OCI-LY7 (cell line): ENCODE measurements at regions of chr21 and their contacts with region 1.

Region 1: DNA sequence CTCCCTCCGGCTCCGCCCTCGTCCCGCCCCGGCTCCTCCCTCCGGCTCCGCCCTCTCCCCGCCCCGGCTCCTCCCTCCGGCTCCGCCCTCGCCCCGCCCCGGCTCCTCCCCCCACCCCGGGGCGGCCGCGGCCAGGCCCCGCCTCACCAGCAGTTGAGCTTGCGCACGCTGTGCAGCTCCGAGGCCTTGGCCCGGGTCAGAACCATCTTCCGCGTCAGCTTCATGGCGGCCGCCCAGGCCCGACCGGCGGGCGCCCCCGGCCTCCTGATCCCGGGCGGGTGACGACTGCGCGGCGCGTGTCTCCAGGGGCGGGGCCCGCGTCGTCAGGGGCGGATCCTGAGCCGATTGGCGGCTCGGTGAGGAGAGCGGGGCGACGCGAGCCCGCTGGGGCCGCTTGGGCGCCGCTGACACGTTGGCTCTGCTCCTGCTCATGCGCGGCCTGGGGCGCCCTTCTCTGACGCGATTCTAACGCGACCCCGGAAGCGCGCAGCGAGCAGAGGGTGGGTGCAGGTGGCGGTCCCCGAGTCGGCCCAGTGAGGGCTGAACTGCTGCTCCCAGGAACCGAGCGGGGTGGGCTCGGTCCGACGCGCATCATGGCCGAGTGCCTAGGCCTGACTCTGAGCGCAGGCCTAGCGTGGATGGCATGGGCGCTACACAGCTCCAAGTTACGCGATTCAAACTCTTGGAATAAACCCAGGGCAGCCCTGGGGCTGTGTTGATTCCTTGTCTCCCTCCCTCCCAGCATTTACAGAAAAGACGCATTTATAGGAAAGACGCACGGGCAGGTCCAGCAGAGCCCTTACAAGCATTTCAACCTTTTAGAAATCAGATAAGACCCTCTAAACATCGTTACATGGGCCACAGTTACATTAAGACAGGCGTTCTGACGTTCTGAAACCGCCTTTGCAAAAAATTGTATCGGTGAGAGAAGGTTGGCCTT is at the start of gene CFAP410:
- DNase-seq: peak; percentile 97
- H3K4me3 ChIP-seq: peak within 1 kb of the TSS; percentile 77
- H3K27ac ChIP-seq: peak within 1 kb of the TSS; percentile 90
- H3K4me1 ChIP-seq: peaks cover 14% of the 10 kb centered on the region
- CTCF ChIP-seq: no peak
- total RNA-seq, gene CFAP410: 11.9 and 20.6 TPM in 2 replicates

Region 2: DNA sequence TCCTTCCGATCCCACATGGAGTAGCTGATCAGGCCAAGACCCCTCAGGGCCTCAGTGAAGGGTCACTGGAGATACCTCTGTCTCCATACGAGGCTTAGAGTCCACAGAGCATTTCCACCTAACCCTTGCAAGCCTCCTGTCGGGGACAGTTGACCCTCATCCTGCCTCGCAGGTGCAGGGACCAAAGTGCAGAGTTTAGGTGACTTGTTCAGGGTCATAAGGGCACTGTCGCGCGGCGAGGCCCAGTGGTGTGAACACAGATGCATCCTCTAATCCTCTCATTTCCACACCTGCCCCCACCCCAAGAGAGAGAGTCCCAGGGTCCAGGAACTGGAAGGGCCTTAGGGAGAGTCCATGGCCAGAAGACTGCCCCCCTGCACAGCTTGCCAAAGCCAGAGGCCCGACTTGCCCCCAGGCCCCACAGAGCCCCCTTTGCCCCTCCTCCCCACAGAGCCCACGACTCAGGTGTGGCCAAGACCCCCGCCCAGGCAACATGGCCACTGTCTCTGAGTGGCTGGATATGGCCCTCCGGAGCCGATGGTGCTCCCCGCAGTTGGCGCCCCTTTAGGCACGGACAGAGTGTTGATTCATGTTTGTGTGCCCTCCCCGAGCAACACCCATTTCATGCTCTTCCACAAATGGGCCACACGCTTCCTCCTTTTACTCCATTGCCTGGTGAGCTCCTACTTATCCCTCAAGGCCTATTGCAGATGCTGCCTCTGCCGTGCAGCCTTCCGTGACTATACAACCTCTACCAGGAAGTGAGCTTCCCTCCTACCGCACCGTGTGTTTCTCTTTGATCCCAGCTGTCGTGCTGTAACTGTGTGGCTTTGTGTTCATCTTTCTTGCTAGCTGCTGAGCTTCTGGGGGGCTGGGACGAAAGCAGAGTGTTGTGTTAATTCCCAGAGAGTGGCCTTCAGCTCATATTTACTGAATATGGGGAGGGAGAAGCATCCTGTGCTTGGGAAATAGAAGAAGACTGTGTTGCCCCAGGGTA is 15.8 kb after region 1 on chr21:
- CTCF ChIA-PET with region 1: interaction called, 3 read pairs
- POLR2A ChIA-PET with region 1: interaction called, 4 read pairs
- intact Hi-C with region 1: loop called (anchors 1 kb)
- DNase-seq: peak; percentile 84
- H3K4me3 ChIP-seq: peak overlapping the region; percentile 6
- H3K27ac ChIP-seq: peak overlapping the region; percentile 35
- H3K4me1 ChIP-seq: peaks cover 37% of the 10 kb centered on the region
- CTCF ChIP-seq: no peak

Region 3: DNA sequence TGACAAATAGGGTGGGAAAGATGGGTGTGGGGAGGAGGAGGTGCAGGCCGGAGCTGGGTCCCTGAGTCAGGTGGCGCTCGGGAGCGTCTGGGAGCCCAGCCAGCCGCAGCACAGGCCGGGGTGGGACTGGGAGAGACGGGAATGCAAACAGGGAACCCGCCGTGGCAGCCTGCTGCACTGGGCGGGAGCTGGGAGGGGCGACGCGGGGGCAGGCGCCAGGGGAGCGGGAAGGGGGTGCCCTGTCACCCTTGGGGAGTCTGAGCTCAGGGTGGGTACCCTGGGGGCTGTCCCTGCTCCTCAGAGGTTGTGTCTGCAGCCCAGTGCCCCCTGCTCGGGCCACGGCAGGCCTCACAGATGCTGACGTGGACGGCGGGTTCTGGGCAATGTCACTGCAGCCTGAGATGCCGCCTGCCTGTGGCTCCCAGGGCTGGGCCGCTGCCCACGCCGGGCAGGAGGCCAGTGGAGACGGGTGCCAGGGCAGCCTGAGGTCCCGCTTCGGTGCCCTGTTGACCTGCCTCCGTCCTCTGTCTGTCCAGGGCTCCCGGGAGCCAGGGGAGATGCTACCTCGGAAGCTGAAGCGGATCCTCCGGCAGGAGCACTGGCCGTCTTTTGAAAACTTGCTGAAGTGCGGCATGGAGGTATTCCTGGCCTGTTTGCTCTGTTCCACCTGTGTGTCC is 99.4 kb after region 1 on chr21:
- CTCF ChIA-PET with region 1: no interaction called
- POLR2A ChIA-PET with region 1: no interaction called
- intact Hi-C with region 1: no loop called
- DNase-seq: no peak
- H3K4me3 ChIP-seq: no peak overlapping the region
- H3K27ac ChIP-seq: no peak overlapping the region
- H3K4me1 ChIP-seq: no peaks in the 10 kb centered on the region
- CTCF ChIP-seq: no peak